ENCODE measurements at regions of chr3 and their contacts with region 1.

Region 1: DNA sequence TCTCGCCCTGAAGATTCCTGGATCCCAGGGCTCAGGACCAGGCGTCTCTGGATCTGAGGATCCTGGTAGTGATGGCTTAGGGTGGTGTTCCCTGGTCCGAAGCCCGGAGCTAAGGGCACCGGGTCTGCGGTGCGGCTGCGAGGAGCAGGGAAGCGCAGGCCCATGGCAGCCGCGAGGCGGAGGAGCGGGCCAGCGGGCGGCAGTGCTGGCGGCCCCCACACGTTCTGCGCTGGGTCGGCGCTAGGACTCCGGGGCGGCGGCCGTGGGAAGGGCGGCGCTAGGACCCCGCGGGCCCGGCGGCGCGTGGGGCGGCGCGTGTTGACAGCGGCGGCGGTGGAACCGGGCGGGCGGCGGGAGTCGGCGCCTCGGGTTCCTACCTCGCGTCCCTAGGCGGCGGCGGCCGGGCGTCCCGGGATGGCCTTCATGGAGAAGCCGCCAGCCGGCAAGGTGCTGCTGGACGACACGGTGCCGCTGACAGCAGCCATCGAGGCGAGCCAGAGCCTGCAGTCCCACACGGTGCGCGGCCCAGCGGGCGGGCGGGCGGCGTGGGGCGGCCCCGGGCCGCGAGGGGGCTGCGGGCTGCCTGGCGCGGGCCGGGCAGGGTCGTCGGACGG is at the start of gene PXK:
- DNase-seq: no peak
- H3K4me3 ChIP-seq: peak within 1 kb of the TSS; percentile 84
- H3K27ac ChIP-seq: peak within 1 kb of the TSS; percentile 60
- H3K27me3 ChIP-seq: no peaks in the 10 kb centered on the region
- CTCF ChIP-seq: peak; percentile 18; the same call in 1 of the 2 replicates
- polyA plus RNA-seq, gene PXK: 56.6 and 70.3 TPM in 2 replicates

Region 2: GRCh38 chr3:58375254-58375653 is 42.6 kb after region 1 on chr3:
- CTCF ChIA-PET with region 1: interaction called, 15 read pairs
- POLR2A ChIA-PET with region 1: interaction called, 3 read pairs
- DNase-seq: no peak
- H3K4me3 ChIP-seq: no peak overlapping the region
- H3K27ac ChIP-seq: no peak overlapping the region
- H3K27me3 ChIP-seq: no peaks in the 10 kb centered on the region
- CTCF ChIP-seq: no peak

Region 3: GRCh38 chr3:58383904-58384303 is 51.2 kb after region 1 on chr3:
- CTCF ChIA-PET with region 1: no interaction called
- POLR2A ChIA-PET with region 1: interaction called, 22 read pairs
- DNase-seq: peak; percentile 91
- H3K4me3 ChIP-seq: no peak overlapping the region
- H3K27ac ChIP-seq: peak overlapping the region; percentile 73
- H3K27me3 ChIP-seq: no peaks in the 10 kb centered on the region
- CTCF ChIP-seq: no peak

Region 4: GRCh38 chr3:58404396-58404795 is 71.7 kb after region 1 on chr3:
- CTCF ChIA-PET with region 1: no interaction called
- POLR2A ChIA-PET with region 1: no interaction called
- DNase-seq: no peak
- H3K4me3 ChIP-seq: no peak overlapping the region
- H3K27ac ChIP-seq: no peak overlapping the region
- H3K27me3 ChIP-seq: no peaks in the 10 kb centered on the region
- CTCF ChIP-seq: no peak

Region 5: DNA sequence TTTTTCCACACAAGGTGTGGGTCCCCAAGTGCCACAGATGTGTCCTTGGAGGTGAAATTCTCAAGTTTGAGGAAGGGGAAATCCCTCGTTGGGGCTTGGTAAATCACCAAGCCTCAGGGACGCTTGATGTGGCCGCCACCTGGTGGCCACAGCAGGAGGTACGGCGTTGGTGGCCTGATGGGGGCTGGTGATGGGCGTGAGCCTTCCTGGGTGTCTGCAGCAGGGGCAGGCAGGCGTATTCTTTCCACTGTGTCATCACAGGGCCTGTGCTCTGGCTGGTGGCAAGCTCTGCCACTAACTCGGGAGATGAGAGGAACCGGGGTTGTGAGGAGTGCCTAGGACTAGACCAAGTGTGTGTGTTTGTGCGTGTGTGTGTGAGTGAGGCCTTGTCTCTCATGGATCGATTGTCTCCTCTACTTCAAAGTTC is 200.1 kb after region 1 on chr3:
- CTCF ChIA-PET with region 1: no interaction called
- POLR2A ChIA-PET with region 1: no interaction called
- DNase-seq: peak; percentile 16
- H3K4me3 ChIP-seq: no peak overlapping the region
- H3K27ac ChIP-seq: no peak overlapping the region
- H3K27me3 ChIP-seq: no peaks in the 10 kb centered on the region
- CTCF ChIP-seq: peak; percentile 93